Activated naive CD4-positive, alpha-beta T cell treated with anti-CD3 and anti-CD28 coated beads for 36 hours (primary cell): ENCODE measurements at regions of chr12 and their contacts with region 1.

Region 1: GRCh38 chr12:42325653-42326474 is at the starts of genes PPHLN1 and ZCRB1:
- DNase-seq: peak; percentile 84
- H3K4me3 Mint-ChIP-seq: peak within 1 kb of the TSS; percentile 94
- H3K27ac Mint-ChIP-seq: peak within 1 kb of the TSS; percentile 94
- H3K4me1 Mint-ChIP-seq: peaks cover 40% of the 10 kb centered on the region
- H3K27me3 Mint-ChIP-seq: no peaks in the 10 kb centered on the region
- total RNA-seq, gene PPHLN1: 52.9 to 63.3 TPM
- total RNA-seq, gene ZCRB1: 79.5 to 84.2 TPM

Region 2: DNA sequence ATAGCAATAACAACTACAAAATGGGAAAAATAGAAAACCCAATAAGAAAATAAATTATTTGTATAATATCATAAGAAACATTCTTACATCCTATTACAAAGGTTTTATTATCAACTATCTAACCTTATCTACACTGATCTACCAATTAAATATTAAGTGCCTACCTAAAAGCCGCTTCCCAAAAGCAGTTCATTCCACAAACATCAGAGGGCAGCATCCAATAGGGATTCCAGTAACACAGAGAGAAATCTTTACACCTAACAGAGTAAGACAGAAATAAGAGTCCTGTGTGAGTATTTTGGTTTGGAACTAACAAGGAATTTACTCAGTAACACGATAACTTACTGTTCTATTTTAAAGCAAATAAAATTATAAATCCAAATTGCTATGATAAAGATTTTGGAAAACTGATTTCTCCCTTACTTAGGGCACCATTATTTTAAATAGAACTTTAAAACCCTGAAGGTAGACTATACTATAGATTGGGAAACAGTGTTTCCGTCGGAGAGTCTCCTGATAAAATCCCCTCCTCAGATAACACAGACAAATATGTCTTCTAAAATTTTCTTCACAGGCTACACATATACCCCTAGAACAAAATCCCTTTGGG is 196.2 kb before region 1 on chr12:
- CTCF ChIA-PET with region 1: interaction called, 7 read pairs
- intact Hi-C with region 1: loop called (anchors 2 kb)
- DNase-seq: peak; percentile 42
- H3K4me3 Mint-ChIP-seq: no peak overlapping the region
- H3K27ac Mint-ChIP-seq: no peak overlapping the region
- H3K4me1 Mint-ChIP-seq: peaks cover 41% of the 10 kb centered on the region
- H3K27me3 Mint-ChIP-seq: no peaks in the 10 kb centered on the region

Region 3: DNA sequence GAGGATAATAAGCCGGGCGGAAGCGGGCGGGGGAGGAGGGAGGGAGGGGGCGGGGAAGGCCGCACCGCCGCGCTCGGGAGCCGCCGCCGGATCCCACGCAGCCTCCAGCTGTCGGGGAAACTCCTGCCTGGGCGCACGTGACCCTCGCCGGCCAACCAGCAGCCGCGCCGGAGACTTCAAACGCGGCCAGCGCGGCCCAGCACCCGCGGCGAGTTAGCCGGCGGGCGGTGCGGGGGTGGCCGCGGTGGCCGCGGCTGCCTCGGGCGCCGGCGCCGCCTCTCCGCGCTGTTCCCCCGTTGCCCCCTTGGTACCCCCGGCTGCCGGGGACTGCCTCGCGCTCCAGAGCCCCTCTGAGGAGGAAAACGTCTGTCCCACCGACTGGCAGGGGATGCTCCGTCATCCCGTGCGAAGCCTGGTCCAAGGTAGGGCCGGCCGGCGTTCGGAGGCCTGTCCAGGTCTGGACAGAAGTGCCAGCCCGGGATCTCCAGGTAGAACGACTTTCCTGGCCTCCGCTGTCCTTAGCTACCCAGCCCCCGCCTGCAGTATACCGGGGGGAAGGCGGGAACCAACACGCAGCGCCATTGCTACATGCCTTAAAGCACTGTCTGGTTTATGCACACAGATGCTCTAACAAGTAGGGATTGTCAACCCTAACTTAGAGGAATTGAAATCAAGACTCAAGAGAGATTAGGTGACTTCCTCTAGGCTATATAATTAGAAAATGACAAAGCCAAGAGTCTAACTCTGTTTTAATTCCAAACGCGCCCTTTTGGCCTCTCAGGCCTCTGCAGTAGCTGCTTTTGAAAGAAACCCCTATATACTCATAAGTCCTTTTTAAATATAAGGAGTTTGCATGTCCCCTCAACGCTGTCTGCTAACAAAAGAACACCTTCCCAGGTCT is 87.4 kb before region 1 on chr12 and contains the start of gene YAF2:
- CTCF ChIA-PET with region 1: no interaction called
- intact Hi-C with region 1: loop called (anchors 1 kb)
- DNase-seq: peak; percentile 90
- H3K4me3 Mint-ChIP-seq: peak within 1 kb of the TSS; percentile 89
- H3K27ac Mint-ChIP-seq: peak within 1 kb of the TSS; percentile 83
- H3K4me1 Mint-ChIP-seq: peaks cover 30% of the 10 kb centered on the region
- H3K27me3 Mint-ChIP-seq: no peaks in the 10 kb centered on the region
- total RNA-seq, gene YAF2: 28.6 to 34.8 TPM

Region 4: GRCh38 chr12:42360747-42361403 is 35.0 kb after region 1 on chr12:
- CTCF ChIA-PET with region 1: interaction called, 3 read pairs
- intact Hi-C with region 1: loop called (anchors 1 kb)
- DNase-seq: no peak
- H3K4me3 Mint-ChIP-seq: no peak overlapping the region
- H3K27ac Mint-ChIP-seq: peak overlapping the region; percentile 65
- H3K4me1 Mint-ChIP-seq: peaks cover 51% of the 10 kb centered on the region
- H3K27me3 Mint-ChIP-seq: no peaks in the 10 kb centered on the region

Region 5: GRCh38 chr12:42421844-42422779 is 96.2 kb after region 1 on chr12:
- CTCF ChIA-PET with region 1: no interaction called
- intact Hi-C with region 1: no loop called
- DNase-seq: no peak
- H3K4me3 Mint-ChIP-seq: no peak overlapping the region
- H3K27ac Mint-ChIP-seq: no peak overlapping the region
- H3K4me1 Mint-ChIP-seq: peaks cover 22% of the 10 kb centered on the region
- H3K27me3 Mint-ChIP-seq: no peaks in the 10 kb centered on the region

Region 6: DNA sequence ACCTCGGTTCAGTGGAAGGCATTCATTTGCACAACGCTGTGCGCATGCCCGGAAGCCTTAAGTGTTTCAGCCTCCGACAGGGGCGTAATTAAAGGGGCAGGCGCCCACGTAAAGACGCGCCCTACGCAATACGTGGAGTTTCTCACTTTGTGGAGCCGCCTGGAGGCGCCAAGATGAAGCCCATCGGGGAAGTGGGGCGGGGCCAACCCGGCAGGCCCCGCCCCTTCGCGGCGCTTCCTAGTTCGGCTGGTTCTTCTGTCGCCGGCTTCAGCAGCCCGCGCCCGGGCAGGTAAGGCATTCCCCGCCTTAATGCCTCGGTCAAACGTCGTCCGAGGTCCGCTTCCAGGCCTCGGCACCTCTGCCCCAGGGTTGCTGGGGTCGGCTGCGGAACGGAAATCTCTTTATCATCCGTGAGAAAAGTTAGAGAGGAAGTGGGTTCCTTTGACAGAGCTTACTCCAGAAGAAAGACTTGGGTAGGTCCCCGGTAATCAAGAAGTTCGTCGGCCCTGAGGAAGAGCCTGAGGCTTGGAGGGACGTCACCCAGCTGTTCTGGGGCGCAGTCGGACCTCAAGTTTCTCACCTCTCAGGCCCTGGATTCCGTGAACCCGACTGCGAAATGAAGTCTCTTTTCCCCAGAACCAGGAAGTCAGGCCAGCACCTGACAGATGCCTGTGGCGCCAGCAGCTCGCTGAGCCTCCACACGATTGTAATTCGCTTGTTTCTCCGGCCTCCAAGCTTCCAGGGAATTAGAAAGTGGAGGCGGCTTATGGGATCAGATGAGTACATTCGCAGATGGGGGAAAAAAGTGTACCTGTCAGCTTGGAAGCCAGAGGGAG is 1433.1 kb after region 1 on chr12 and contains the starts of genes IRAK4 and PUS7L:
- CTCF ChIA-PET with region 1: no interaction called
- intact Hi-C with region 1: loop called (anchors 5 kb)
- DNase-seq: peak; percentile 96
- H3K4me3 Mint-ChIP-seq: peak within 1 kb of the TSS; percentile 97
- H3K27ac Mint-ChIP-seq: peak within 1 kb of the TSS; percentile 96
- H3K4me1 Mint-ChIP-seq: peaks cover 58% of the 10 kb centered on the region
- H3K27me3 Mint-ChIP-seq: no peaks in the 10 kb centered on the region
- total RNA-seq, gene IRAK4: 24.2 to 24.5 TPM
- total RNA-seq, gene PUS7L: 8.1 to 10.5 TPM